OCI-LY7 (cell line): ENCODE measurements at regions of chrX and their contacts with region 1.

Region 1: DNA sequence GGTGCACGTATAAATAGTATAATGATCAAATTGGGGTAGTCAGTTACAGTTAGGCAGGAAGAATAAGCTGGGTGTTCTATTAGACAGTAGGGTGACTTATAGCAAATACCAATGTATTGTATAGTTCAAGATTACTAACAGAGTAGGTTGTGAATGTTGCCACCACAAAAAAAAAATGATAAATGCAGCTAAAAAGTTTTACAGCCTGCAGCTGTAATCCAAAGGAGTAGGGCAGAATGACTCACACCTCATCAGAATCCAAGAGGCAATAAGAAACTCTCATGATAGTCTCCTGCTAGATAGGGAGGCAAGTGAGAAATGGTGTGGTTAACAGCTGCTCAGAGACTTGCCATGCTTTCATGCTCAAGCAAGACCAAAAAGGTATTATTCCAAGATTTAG is 19.6 kb upstream of the TCEAL4 start:
- DNase-seq: no peak
- H3K4me3 ChIP-seq: no peak overlapping the region
- H3K27ac ChIP-seq: no peak overlapping the region
- H3K4me1 ChIP-seq: peaks cover 5% of the 10 kb centered on the region
- CTCF ChIP-seq: no peak

Region 2: GRCh38 chrX:103384672-103385071 is 181.1 kb before region 1 on chrX:
- CTCF ChIA-PET with region 1: no interaction called
- POLR2A ChIA-PET with region 1: no interaction called
- intact Hi-C with region 1: no loop called
- DNase-seq: no peak
- H3K4me3 ChIP-seq: no peak overlapping the region
- H3K27ac ChIP-seq: no peak overlapping the region
- H3K4me1 ChIP-seq: no peaks in the 10 kb centered on the region
- CTCF ChIP-seq: no peak

Region 3: GRCh38 chrX:103629318-103630170 is 63.8 kb after region 1 on chrX:
- CTCF ChIA-PET with region 1: no interaction called
- POLR2A ChIA-PET with region 1: interaction called, 13 read pairs
- intact Hi-C with region 1: no loop called
- DNase-seq: peak; percentile 11
- H3K4me3 ChIP-seq: peak overlapping the region; percentile 80
- H3K27ac ChIP-seq: peak overlapping the region; percentile 81
- H3K4me1 ChIP-seq: peaks cover 21% of the 10 kb centered on the region
- CTCF ChIP-seq: peak; percentile 63

Region 4: GRCh38 chrX:103789004-103789403 is 223.3 kb after region 1 on chrX:
- CTCF ChIA-PET with region 1: no interaction called
- POLR2A ChIA-PET with region 1: no interaction called
- intact Hi-C with region 1: no loop called
- DNase-seq: peak; percentile 73
- H3K4me3 ChIP-seq: peak overlapping the region; percentile 39
- H3K27ac ChIP-seq: peak overlapping the region; percentile 92
- H3K4me1 ChIP-seq: peaks cover 35% of the 10 kb centered on the region
- CTCF ChIP-seq: no peak